ENCODE measurements at regions of chr7 and their contacts with region 1.

Region 1: DNA sequence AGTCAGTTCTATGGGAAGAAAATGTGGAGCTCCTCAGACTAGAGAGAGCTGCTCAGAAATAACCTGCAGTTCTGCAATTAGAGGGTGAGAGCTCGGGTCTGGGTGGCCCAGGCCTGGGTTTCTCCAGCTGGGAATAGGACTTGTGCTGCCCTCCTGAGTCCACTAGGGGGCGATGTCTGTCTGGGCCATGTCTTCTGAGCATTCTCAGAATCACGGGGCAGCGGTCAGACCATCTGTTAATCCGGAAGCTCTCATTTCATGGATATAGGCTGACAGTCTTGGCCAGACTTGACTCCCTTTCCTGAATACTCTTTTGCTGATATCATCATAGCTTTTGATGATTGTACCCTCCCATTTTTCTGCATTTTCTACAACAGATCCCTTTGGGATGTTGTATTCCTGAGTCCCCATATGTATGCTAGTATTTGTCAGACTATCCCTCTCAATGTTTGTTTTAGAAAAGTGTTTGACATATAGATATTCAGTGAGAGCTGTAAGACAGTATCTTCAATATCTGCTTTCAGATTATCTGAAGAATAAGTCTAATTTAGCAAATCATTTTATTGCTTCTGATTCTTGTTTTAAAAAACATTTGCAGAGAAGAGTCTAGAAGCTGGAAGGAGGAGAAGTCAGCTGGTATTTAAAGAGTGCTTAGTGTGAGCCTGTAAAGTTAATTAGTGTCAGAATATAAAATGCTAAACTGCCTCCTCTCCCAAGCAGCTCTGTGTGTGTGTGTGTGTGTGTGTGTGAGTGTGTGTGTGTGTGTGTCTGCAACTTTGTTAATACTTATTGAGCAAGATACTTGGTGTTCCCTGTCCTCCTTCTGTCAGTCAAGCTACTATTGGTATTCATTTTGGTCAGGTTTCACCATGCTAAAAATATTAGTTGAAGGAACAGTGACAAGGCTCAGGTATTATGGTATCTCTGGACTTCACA is 38.0 kb downstream of the STARD3NL start:
- DNase-seq: peak; percentile 81
- ATAC-seq: peak; percentile 92
- H3K4me3 Mint-ChIP-seq: no peak overlapping the region
- H3K27ac Mint-ChIP-seq: peak overlapping the region; percentile 57
- H3K4me1 Mint-ChIP-seq: peaks cover 41% of the 10 kb centered on the region
- H3K27me3 Mint-ChIP-seq: no peaks in the 10 kb centered on the region; the same call in 1 of the 2 replicates
- CTCF ChIP-seq: peak; percentile 94

Region 2: GRCh38 chr7:37476881-37477450 is 739.0 kb before region 1 on chr7:
- CTCF ChIA-PET with region 1: no interaction called
- POLR2A ChIA-PET with region 1: no interaction called
- DNase-seq: no peak
- ATAC-seq: no peak
- H3K4me3 Mint-ChIP-seq: no peak overlapping the region
- H3K27ac Mint-ChIP-seq: no peak overlapping the region
- H3K4me1 Mint-ChIP-seq: peaks cover 14% of the 10 kb centered on the region
- H3K27me3 Mint-ChIP-seq: no peaks in the 10 kb centered on the region
- CTCF ChIP-seq: no peak

Region 3: DNA sequence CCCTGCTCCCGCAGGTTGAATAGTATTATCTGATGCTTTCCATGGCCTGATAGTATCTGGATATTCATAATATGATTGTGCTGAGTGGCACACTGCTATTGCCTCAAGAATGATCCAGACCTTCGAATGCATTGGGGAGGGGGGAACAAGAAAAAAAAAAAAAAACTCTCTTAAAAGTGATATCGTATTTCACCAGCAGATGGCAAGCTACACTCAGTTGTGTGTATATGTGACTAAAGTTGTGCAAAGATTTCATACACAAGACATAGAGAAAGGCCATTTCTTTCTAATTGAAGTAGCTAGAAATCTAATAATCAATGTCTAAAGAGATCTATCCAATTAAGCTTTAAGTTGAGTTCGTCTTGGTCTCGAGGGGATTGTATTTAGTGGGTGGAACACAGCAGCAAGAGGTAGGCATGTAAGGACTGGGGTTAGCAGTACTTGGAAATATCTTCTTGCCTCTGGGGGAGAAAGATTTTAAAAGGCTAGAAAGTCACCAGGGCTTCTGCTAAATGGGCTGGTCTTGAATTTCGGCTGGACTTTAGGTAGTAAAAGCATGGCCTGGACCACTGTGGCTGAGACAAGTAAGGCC is 314.7 kb before region 1 on chr7:
- CTCF ChIA-PET with region 1: interaction called, 11 read pairs
- POLR2A ChIA-PET with region 1: no interaction called
- DNase-seq: no peak
- ATAC-seq: peak; percentile 82
- H3K4me3 Mint-ChIP-seq: no peak overlapping the region
- H3K27ac Mint-ChIP-seq: no peak overlapping the region
- H3K4me1 Mint-ChIP-seq: peaks cover 2% of the 10 kb centered on the region
- H3K27me3 Mint-ChIP-seq: no peaks in the 10 kb centered on the region
- CTCF ChIP-seq: no peak; the same call in 1 of the 2 replicates

Region 4: DNA sequence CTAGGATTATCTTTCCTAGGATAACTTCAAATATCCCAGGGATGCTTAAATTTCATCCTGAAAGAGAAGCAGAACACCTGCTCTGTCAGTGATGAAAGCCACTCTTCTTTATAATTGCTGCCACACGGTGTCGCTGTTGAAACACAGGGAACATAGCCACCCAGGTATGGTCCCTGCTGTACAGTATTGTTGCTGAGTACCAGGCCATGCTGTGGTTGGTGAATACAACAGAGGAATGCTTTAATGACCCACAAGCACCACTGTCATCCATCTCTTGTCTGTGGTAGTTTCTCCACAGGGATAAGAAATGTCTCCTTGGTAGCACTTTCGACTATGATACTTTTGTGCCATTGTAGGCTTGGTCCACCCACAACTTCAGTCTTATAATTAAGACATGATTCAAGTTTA is 108.5 kb before region 1 on chr7:
- CTCF ChIA-PET with region 1: interaction called, 23 read pairs
- POLR2A ChIA-PET with region 1: interaction called, 5 read pairs
- DNase-seq: peak; percentile 81
- ATAC-seq: peak; percentile 94
- H3K4me3 Mint-ChIP-seq: no peak overlapping the region
- H3K27ac Mint-ChIP-seq: no peak overlapping the region
- H3K4me1 Mint-ChIP-seq: 0 out of 2 replicates have a peak, but pooled peaks cover 7% of the 10 kb centered on the region
- H3K27me3 Mint-ChIP-seq: no peaks in the 10 kb centered on the region
- CTCF ChIP-seq: peak; percentile 74

Region 5: DNA sequence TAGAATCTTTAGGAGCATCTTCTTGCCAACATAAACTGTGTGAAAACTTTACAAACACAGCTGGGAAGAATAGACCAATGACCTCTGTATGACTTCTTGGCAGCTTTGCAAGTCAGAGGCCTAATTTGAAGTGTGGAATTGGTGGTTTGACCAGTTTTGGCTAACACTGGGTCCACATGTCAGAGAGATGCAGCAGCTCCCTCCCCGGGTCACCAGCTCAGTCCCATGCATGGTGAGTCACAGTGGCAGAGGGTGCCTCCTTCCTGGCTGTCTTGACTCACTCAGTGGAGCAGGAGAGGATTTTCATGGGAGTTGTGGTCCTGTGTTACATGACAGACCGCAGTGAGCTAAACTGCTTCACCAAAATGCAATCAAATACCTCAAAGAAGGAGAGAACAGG is 46.2 kb before region 1 on chr7:
- CTCF ChIA-PET with region 1: no interaction called
- POLR2A ChIA-PET with region 1: no interaction called
- DNase-seq: no peak
- ATAC-seq: peak; percentile 36; the same call in 1 of the 2 replicates
- H3K4me3 Mint-ChIP-seq: no peak overlapping the region
- H3K27ac Mint-ChIP-seq: no peak overlapping the region
- H3K4me1 Mint-ChIP-seq: peaks cover 8% of the 10 kb centered on the region
- H3K27me3 Mint-ChIP-seq: peaks cover 2% of the 10 kb centered on the region; the same call in 1 of the 2 replicates
- CTCF ChIP-seq: no peak

Region 6: GRCh38 chr7:38186593-38187314 is 29.2 kb before region 1 on chr7:
- CTCF ChIA-PET with region 1: interaction called, 17 read pairs
- POLR2A ChIA-PET with region 1: no interaction called
- DNase-seq: no peak
- ATAC-seq: no peak
- H3K4me3 Mint-ChIP-seq: no peak overlapping the region
- H3K27ac Mint-ChIP-seq: no peak overlapping the region
- H3K4me1 Mint-ChIP-seq: peaks cover 46% of the 10 kb centered on the region
- H3K27me3 Mint-ChIP-seq: no peaks in the 10 kb centered on the region
- CTCF ChIP-seq: no peak

Region 7: GRCh38 chr7:38229386-38229785 is 13.4 kb after region 1 on chr7:
- CTCF ChIA-PET with region 1: interaction called, 24 read pairs
- POLR2A ChIA-PET with region 1: no interaction called
- DNase-seq: no peak
- ATAC-seq: no peak
- H3K4me3 Mint-ChIP-seq: no peak overlapping the region
- H3K27ac Mint-ChIP-seq: no peak overlapping the region
- H3K4me1 Mint-ChIP-seq: peaks cover 4% of the 10 kb centered on the region
- H3K27me3 Mint-ChIP-seq: no peaks in the 10 kb centered on the region
- CTCF ChIP-seq: no peak

Region 8: DNA sequence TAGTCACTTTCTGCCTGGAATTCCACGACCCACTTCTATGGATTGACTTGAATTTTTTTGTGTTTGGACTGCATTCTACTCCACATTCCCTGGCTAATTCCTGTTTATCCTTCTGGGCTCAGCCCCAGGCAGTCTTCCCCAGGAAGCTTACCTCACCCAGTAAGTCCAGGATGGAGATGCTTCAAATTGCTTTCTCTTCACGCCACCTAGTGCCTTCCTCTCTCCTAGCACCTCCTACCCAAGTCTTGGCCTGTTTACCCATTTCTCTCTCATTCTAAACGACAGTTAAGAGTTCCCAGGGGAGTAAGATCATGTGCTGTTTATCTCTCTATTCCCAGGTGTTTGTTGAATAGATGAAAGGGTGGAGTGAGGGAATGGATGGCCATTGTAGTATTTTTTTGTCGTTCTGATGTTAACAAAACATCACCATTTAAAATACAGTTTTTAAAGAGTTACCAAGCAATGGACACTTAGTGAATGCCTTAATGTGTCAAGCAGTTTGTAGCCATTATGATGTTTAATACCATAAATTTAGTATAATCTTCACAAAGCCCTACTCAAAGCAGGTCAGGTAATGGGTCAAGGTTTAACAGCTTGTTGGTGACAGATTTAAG is 102.9 kb after region 1 on chr7:
- CTCF ChIA-PET with region 1: interaction called, 44 read pairs
- POLR2A ChIA-PET with region 1: no interaction called
- DNase-seq: peak; percentile 49
- ATAC-seq: peak; percentile 97
- H3K4me3 Mint-ChIP-seq: no peak overlapping the region
- H3K27ac Mint-ChIP-seq: peak overlapping the region; percentile 48
- H3K4me1 Mint-ChIP-seq: peaks cover 26% of the 10 kb centered on the region
- H3K27me3 Mint-ChIP-seq: no peaks in the 10 kb centered on the region; the same call in 1 of the 2 replicates
- CTCF ChIP-seq: no peak

Region 9: GRCh38 chr7:38561166-38561565 is 345.2 kb after region 1 on chr7:
- CTCF ChIA-PET with region 1: no interaction called
- POLR2A ChIA-PET with region 1: no interaction called
- DNase-seq: no peak
- ATAC-seq: no peak
- H3K4me3 Mint-ChIP-seq: no peak overlapping the region
- H3K27ac Mint-ChIP-seq: no peak overlapping the region
- H3K4me1 Mint-ChIP-seq: peaks cover 7% of the 10 kb centered on the region
- H3K27me3 Mint-ChIP-seq: no peaks in the 10 kb centered on the region; the same call in 1 of the 2 replicates
- CTCF ChIP-seq: no peak

Measured in WTC11 (cell line).